K562 (cell line): ENCODE measurements at regions of chr16 and their contacts with region 1.

Region 1: DNA sequence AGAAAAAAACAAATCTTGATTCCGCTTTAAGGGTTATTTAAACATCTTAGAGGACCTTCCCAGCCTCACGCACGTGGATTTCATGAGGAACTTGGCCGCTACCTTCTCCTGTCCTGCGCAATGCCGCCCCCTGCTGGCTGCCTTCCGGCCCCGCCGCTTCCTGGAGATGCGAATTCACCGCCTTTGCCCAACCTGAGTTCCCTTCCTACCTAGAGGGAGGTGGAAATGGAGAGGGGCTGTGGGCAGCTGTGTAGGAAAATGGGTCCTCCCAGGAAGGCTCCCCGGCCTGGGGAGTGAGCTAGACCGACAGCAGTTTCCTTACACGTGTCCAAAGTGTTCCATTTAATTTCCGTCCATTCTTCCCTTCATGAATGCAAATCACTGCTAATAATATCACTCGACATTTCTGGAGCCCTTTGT is 1.0 kb upstream of the ABCC12 start:
- DNase-seq: peak; percentile 68 to 82 (median 78)
- ATAC-seq: peak; percentile 96
- H3K4me3 ChIP-seq: no peak overlapping the region
- H3K27ac ChIP-seq: no peak overlapping the region
- H3K4me1 ChIP-seq: peaks cover 0 to 3% of the 10 kb centered on the region in 2 experiments; a peak in 2 of 5 replicates
- H3K27me3 ChIP-seq: peaks cover 15 to 50% of the 10 kb centered on the region in 2 experiments; a peak in 3 of 5 replicates
- CTCF ChIP-seq: peak; percentile 90 to 93 (median 92)
- EP300 ChIP-seq: no peak
- POLR2A ChIP-seq: no peak
- RAD21 ChIP-seq: peak; percentile 62 to 85

Region 2: GRCh38 chr16:47037746-47038458 is 1118.9 kb before region 1 on chr16:
- CTCF ChIA-PET with region 1: no interaction called
- POLR2A ChIA-PET with region 1: no interaction called
- in situ Hi-C with region 1: loop called (anchors 5 kb)
- intact Hi-C with region 1: loop called (anchors 2 kb)
- DNase-seq: peak; percentile 92 to 98 (median 97)
- ATAC-seq: peak; percentile 98
- H3K4me3 ChIP-seq: peak overlapping the region; percentile 61
- H3K27ac ChIP-seq: no peak overlapping the region
- H3K4me1 ChIP-seq: peaks cover 0 to 13% of the 10 kb centered on the region in 2 experiments; a peak in 3 of 5 replicates
- H3K27me3 ChIP-seq: peaks cover 15 to 43% of the 10 kb centered on the region in 2 experiments; a peak in 4 of 5 replicates
- CTCF ChIP-seq: peak; percentile 92 to 95 (median 94)
- EP300 ChIP-seq: no peak
- POLR2A ChIP-seq: no peak
- RAD21 ChIP-seq: peak; percentile 77 to 93

Region 3: GRCh38 chr16:47141773-47142485 is 1014.9 kb before region 1 on chr16:
- CTCF ChIA-PET with region 1: interaction called, 4 read pairs
- POLR2A ChIA-PET with region 1: no interaction called
- in situ Hi-C with region 1: no loop called
- intact Hi-C with region 1: loop called (anchors 1 kb)
- DNase-seq: peak; percentile 59 to 90 (median 70)
- ATAC-seq: peak; percentile 84
- H3K4me3 ChIP-seq: peak overlapping the region; percentile 64
- H3K27ac ChIP-seq: peak overlapping the region; percentile 81; the same call in 1 of the 3 replicates
- H3K4me1 ChIP-seq: peaks cover 8 to 21% of the 10 kb centered on the region in 2 experiments; a peak in 4 of 5 replicates
- H3K27me3 ChIP-seq: no peaks in the 10 kb centered on the region
- CTCF ChIP-seq: peak; percentile 98
- EP300 ChIP-seq: no peak
- POLR2A ChIP-seq: no peak
- RAD21 ChIP-seq: peak; percentile 72 to 81

Region 4: DNA sequence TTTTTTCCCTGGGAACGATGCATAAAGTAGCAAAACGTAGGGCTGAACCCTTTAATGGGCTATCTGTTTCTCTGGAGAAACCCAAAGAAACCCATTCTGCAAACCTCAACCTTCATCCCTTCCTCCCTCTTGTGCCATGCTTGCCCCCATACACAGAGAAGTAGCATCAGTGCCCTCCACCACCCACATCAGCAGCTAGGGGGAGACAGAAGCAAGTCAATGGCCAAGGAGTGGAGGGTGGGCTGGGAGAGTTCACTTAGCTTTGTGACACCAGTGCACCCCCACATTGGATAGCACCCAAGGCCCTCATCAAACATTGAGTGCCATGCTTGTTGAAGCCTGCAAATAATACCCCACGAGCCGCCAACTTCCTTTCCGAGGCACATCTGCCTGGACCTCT is 283.4 kb before region 1 on chr16:
- CTCF ChIA-PET with region 1: no interaction called
- POLR2A ChIA-PET with region 1: no interaction called
- in situ Hi-C with region 1: no loop called
- intact Hi-C with region 1: loop called (anchors 10 kb)
- DNase-seq: peak; percentile 19 to 37 (median 28)
- ATAC-seq: peak; percentile 90
- H3K4me3 ChIP-seq: no peak overlapping the region
- H3K27ac ChIP-seq: no peak overlapping the region
- H3K4me1 ChIP-seq: no peaks in the 10 kb centered on the region
- H3K27me3 ChIP-seq: no peaks in the 10 kb centered on the region
- CTCF ChIP-seq: peak; percentile 58 to 62 (median 62)
- EP300 ChIP-seq: no peak
- POLR2A ChIP-seq: no peak
- RAD21 ChIP-seq: peak in 1 of 2 experiments; percentile 54; a peak in 2 of 4 replicates

Region 5: GRCh38 chr16:48117217-48118105 is 39.3 kb before region 1 on chr16:
- CTCF ChIA-PET with region 1: no interaction called
- POLR2A ChIA-PET with region 1: no interaction called
- in situ Hi-C with region 1: no loop called
- intact Hi-C with region 1: loop called (anchors 2 kb)
- DNase-seq: peak; percentile 81 to 98 (median 93)
- ATAC-seq: peak; percentile 100
- H3K4me3 ChIP-seq: no peak overlapping the region
- H3K27ac ChIP-seq: no peak overlapping the region
- H3K4me1 ChIP-seq: peaks cover 0 to 10% of the 10 kb centered on the region in 2 experiments; a peak in 1 of 5 replicates
- H3K27me3 ChIP-seq: peaks cover 0 to 24% of the 10 kb centered on the region in 2 experiments; a peak in 1 of 5 replicates
- CTCF ChIP-seq: peak; percentile 96 to 99 (median 98)
- EP300 ChIP-seq: no peak
- POLR2A ChIP-seq: no peak
- RAD21 ChIP-seq: peak in 1 of 2 experiments; percentile 68; a peak in 2 of 4 replicates